H1 (cell line): ENCODE measurements at regions of chr17 and their contacts with region 1.

Region 1: DNA sequence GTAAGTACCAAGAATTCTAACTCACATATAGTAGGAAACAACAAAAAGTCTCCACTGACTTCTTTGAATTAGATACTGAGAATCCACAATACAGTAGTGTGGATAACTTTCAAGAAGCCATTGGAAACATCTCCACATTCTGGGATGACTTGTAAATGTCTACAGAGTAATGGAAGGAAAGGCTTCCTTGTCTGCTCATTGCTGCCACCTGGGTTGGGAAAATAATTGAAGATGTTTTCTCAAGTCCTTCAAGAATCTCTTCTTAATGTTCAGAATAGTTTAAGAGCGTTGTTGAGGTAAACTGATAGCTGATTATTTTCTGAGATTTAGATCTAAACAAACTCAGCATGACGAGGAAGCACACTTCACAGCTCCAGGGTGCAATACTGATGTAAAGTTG is 14.0 kb downstream of the CPSF4L start:
- DNase-seq: no peak
- H3K4me3 ChIP-seq: no peak overlapping the region
- H3K27ac ChIP-seq: no peak overlapping the region
- H3K4me1 ChIP-seq: no peaks in the 10 kb centered on the region
- H3K27me3 ChIP-seq: no peaks in the 10 kb centered on the region
- CTCF ChIP-seq: peak in 1 of 3 experiments; percentile 3; a peak in 1 of 4 replicates
- EP300 ChIP-seq: no peak
- POLR2A ChIP-seq: no peak
- RAD21 ChIP-seq: peak in 1 of 2 experiments; percentile 7; a peak in 1 of 4 replicates

Region 2: DNA sequence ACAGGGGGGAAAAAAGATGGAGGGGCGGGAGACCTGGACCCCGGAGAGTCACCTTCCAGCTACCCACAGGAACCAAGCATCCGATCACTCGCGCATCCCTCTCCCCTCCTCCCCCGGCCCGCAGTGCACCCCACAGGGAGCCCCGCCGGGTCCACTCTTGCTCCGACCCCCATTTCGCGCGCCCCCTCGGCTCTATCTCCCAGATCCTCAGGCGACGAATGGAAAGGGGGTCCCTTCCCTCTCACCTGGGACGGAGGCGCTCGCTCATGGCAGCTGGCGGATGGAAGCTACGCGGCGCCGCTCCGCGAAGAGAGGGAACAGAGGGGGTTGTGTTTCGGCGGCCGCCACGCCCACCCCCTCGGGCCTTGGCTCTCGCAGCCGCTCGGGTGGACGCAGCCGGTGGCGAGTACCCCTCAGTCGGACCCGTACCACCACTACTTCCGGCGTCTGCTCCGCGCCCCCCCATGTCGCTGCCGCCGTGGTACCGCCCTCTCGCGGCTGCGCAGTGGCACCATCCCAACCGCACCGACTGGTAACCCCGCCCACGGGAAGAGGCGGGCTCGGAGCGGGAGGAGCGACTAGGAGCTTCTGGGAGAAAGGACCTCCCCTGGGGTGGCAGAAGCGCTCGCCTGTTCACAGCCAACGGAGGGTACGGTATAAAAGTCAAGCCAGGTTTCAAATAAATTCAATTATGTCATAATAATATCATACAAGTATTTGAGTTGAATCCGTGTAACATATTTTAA is 15.7 kb before region 1 on chr17:
- CTCF ChIA-PET with region 1: interaction called, 12 read pairs
- POLR2A ChIA-PET with region 1: interaction called, 7 read pairs
- DNase-seq: peak; percentile 93 to 99
- H3K4me3 ChIP-seq: peak overlapping the region; percentile 90 to 94 (median 92)
- H3K27ac ChIP-seq: peak overlapping the region; percentile 74
- H3K4me1 ChIP-seq: peaks cover 0 to 9% (median 4%) of the 10 kb centered on the region in 4 experiments; a peak in 5 of 7 replicates
- H3K27me3 ChIP-seq: no peaks in the 10 kb centered on the region
- CTCF ChIP-seq: peak in 2 of 3 experiments; percentile 15 to 24; a peak in 1 of 4 replicates
- EP300 ChIP-seq: peak in 1 of 2 experiments; percentile 41; a peak in 1 of 3 replicates
- POLR2A ChIP-seq: peak; percentile 40 to 61
- RAD21 ChIP-seq: no peak

Region 3: GRCh38 chr17:73492821-73493814 is 245.4 kb after region 1 on chr17:
- CTCF ChIA-PET with region 1: no interaction called
- POLR2A ChIA-PET with region 1: no interaction called
- DNase-seq: no peak
- H3K4me3 ChIP-seq: no peak overlapping the region
- H3K27ac ChIP-seq: no peak overlapping the region
- H3K4me1 ChIP-seq: peaks cover 2 to 18% (median 9%) of the 10 kb centered on the region in 4 experiments
- H3K27me3 ChIP-seq: no peaks in the 10 kb centered on the region; a peak in 1 of 7 replicates
- CTCF ChIP-seq: no peak
- EP300 ChIP-seq: no peak
- POLR2A ChIP-seq: no peak
- RAD21 ChIP-seq: no peak